Mammary epithelial cell (primary cell): ENCODE measurements at regions of chr1 and their contacts with region 1.

Region 1: GRCh38 chr1:78323311-78323710 is 167.5 kb upstream of the PTGFR start:
- DNase-seq: peak; percentile 30
- H3K4me3 ChIP-seq: no peak overlapping the region
- H3K27ac ChIP-seq: no peak overlapping the region
- H3K4me1 ChIP-seq: no peaks in the 10 kb centered on the region
- H3K27me3 ChIP-seq: no peaks in the 10 kb centered on the region
- CTCF ChIP-seq: no peak

Region 2: GRCh38 chr1:78210175-78210574 is 113.1 kb before region 1 on chr1:
- CTCF ChIA-PET with region 1: interaction called, 11 read pairs
- dilution Hi-C with region 1: no loop called
- in situ Hi-C with region 1: no loop called
- intact Hi-C with region 1: no loop called
- DNase-seq: peak; percentile 39
- H3K4me3 ChIP-seq: no peak overlapping the region
- H3K27ac ChIP-seq: no peak overlapping the region
- H3K4me1 ChIP-seq: peaks cover 13% of the 10 kb centered on the region
- H3K27me3 ChIP-seq: no peaks in the 10 kb centered on the region
- CTCF ChIP-seq: no peak

Region 3: GRCh38 chr1:78237364-78237916 is 85.9 kb before region 1 on chr1:
- CTCF ChIA-PET with region 1: no interaction called
- dilution Hi-C with region 1: no loop called
- in situ Hi-C with region 1: no loop called
- intact Hi-C with region 1: no loop called
- DNase-seq: peak; percentile 88
- H3K4me3 ChIP-seq: no peak overlapping the region
- H3K27ac ChIP-seq: no peak overlapping the region
- H3K4me1 ChIP-seq: peaks cover 17% of the 10 kb centered on the region
- H3K27me3 ChIP-seq: no peaks in the 10 kb centered on the region
- CTCF ChIP-seq: no peak

Region 4: GRCh38 chr1:78286686-78287085 is 36.6 kb before region 1 on chr1:
- CTCF ChIA-PET with region 1: no interaction called
- dilution Hi-C with region 1: loop called (anchors 5 kb)
- in situ Hi-C with region 1: no loop called
- intact Hi-C with region 1: no loop called
- DNase-seq: peak; percentile 48
- H3K4me3 ChIP-seq: no peak overlapping the region
- H3K27ac ChIP-seq: no peak overlapping the region
- H3K4me1 ChIP-seq: peaks cover 6% of the 10 kb centered on the region
- H3K27me3 ChIP-seq: no peaks in the 10 kb centered on the region
- CTCF ChIP-seq: no peak

Region 5: DNA sequence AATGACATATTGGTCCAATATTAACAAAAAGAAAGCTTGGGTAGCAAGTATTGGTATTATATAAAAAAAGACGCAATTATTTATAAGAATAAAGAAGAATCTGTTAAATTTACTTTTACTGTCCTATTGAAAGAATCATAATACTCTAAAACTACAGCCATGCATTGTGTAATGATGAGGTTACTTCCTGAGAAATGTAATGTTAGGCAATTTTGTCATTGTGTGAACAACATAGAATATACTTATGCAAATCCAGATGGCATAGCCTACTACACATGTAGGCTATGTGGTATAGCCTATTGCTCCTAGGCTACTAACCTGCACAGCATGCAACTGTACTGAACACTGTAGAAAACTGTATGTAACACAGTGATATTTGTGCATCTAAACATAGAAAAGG is 46.2 kb after region 1 on chr1:
- CTCF ChIA-PET with region 1: no interaction called
- dilution Hi-C with region 1: loop called (anchors 5 kb)
- in situ Hi-C with region 1: no loop called
- intact Hi-C with region 1: no loop called
- DNase-seq: peak; percentile 7
- H3K4me3 ChIP-seq: no peak overlapping the region
- H3K27ac ChIP-seq: no peak overlapping the region
- H3K4me1 ChIP-seq: peaks cover 21% of the 10 kb centered on the region
- H3K27me3 ChIP-seq: no peaks in the 10 kb centered on the region
- CTCF ChIP-seq: no peak

Region 6: DNA sequence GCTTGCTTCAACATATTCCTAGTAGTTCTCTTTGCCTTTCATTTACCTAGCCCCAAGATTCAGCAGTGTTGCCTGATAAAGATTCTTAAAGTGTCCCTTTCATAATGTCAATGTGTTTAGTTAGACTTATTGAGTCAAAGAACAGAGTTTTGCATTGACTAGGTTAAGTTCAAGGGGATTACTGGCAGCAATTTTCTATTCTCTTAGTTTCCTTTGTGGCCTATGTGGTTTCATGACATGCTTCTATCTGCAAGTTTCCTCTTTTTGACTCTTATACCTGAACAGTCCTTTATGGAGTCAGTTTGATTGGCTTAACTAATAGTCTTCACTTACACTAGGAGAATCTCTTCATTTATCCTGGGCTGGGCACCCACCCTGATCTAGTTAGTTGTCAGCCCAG is 531.9 kb after region 1 on chr1:
- CTCF ChIA-PET with region 1: no interaction called
- dilution Hi-C with region 1: no loop called
- in situ Hi-C with region 1: no loop called
- intact Hi-C with region 1: no loop called
- DNase-seq: no peak
- H3K4me3 ChIP-seq: no peak overlapping the region
- H3K27ac ChIP-seq: no peak overlapping the region
- H3K4me1 ChIP-seq: no peaks in the 10 kb centered on the region
- H3K27me3 ChIP-seq: no peaks in the 10 kb centered on the region
- CTCF ChIP-seq: no peak